HAP-1 (cell line): ENCODE measurements at regions of chr1 and their contacts with region 1.

Region 1: DNA sequence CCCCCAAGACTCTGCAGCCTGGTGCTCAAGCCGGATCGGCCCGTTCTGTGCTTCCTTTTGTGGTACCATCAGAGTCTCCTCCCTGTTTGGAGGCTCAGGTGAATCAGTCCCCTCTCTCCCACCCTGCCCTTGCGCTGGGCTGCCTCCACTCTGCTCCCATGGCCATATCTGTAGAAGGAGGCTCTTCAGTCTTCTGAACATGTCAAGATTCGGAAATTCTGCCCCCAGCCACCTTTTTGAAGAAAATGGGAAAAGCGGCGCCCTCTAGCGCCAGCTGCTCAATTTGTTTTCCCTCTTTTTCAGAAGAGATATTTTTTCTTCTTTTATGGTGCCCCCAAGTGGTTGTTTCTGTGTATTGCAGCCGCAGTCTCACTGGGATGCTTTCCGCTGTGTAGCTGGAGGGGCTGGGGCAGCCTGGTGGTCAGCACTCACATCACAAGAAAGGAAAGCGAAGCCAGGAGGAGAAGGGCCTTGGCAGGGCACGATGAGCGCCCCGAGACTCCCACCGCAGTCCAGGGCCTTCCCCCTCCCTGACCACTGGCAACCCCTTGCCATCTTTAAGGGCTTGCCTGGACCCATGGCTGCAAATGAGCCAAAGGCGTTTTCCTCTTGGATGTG is 58.4 kb upstream of the CACNA1E start:
- DNase-seq: peak; percentile 63 to 91
- H3K4me3 ChIP-seq: no peak overlapping the region
- H3K4me1 ChIP-seq: no peaks in the 10 kb centered on the region
- H3K27me3 ChIP-seq: no peaks in the 10 kb centered on the region

Region 2: GRCh38 chr1:181189691-181190363 is 235.1 kb before region 1 on chr1:
- in situ Hi-C with region 1: loop called (anchors 5 kb)
- DNase-seq: peak; percentile 51 to 83
- H3K4me3 ChIP-seq: peak overlapping the region; percentile 30
- H3K4me1 ChIP-seq: no peaks in the 10 kb centered on the region
- H3K27me3 ChIP-seq: no peaks in the 10 kb centered on the region